SK-MEL-5 (cell line): ENCODE measurements at regions of chr7 and their contacts with region 1.

Region 1: DNA sequence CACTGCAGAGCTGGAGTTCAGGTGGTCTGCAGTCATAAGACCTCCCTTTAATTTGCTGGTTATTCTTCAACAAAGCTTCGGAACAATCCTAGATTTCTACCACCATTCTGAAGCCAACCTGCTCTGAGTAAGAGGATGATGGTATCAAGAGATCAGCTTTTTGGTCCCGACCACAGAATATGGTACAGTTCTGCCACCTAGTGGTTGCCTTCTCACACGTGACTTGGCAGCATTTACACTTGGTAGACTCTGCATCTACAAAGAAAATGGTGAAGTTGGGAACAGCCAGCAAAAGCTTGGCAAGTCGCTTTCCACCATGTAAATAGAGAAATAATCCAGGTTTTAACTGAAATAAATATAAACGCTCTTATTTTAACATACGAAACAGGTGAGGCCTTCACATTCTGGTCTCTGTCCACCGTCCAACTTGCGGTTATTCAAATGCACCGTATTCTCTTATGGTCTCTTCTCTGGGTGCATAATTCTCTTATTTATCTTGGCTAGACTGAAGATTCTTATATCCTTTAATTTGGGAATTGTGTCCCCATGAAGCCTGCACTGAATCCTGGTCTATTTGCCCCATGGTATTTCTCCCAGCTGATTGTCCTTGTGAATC is 173.9 kb upstream of the GRM3 start:
- DNase-seq: peak; percentile 91

Region 2: GRCh38 chr7:85890244-85890811 is 579.5 kb before region 1 on chr7:
- in situ Hi-C with region 1: loop called (anchors 25 kb)
- DNase-seq: peak; percentile 72